OCI-LY7 (cell line): ENCODE measurements at regions of chr4 and their contacts with region 1.

Region 1: GRCh38 chr4:19151684-19152083 is 1100.0 kb upstream of the SLIT2 start:
- DNase-seq: no peak
- H3K4me3 ChIP-seq: no peak overlapping the region
- H3K27ac ChIP-seq: no peak overlapping the region
- H3K4me1 ChIP-seq: peaks cover 12% of the 10 kb centered on the region
- CTCF ChIP-seq: no peak

Region 2: GRCh38 chr4:19135895-19136633 is 15.6 kb before region 1 on chr4:
- CTCF ChIA-PET with region 1: interaction called, 4 read pairs
- POLR2A ChIA-PET with region 1: interaction called, 10 read pairs
- intact Hi-C with region 1: no loop called
- DNase-seq: peak; percentile 11
- H3K4me3 ChIP-seq: no peak overlapping the region
- H3K27ac ChIP-seq: no peak overlapping the region
- H3K4me1 ChIP-seq: peaks cover 7% of the 10 kb centered on the region
- CTCF ChIP-seq: no peak